Heart right ventricle (tissue), 16 donors: ENCODE measurements at regions of chr1 and their contacts with region 1.

Region 1: DNA sequence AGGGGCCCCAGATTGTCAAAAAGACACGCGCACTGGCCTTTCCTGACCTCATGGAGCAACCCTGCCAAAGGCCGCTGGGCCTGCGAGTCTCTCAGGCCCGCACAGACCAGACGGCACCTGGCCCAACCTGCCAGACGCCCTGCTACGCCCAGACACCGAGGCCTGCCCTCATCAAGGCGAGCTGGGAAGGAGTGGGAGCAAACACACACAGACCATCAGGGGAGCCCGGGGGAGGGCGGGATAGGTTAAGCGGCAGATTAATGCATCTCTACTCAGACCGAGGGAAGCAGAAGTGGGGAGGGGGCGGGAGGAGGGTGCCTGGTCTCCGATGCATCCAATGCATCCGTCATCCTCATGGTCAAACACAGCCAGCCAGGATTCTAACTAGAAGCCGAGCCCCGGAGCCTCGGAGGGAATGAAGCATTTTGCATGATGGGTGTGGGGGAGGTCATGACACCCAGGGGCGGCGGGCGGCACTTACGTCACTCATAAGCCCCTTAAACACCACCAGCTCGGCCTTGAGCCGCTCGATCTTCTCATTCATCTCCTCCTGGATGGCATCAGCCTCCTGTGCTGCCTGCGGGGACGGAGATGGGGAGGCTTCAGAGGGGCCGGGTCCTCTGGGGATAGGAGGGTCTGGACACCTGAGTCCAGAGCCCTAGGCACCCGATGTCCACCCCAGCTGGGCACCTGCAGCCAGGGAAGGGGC is 17.0 kb upstream of the ALDH4A1 start:
- DNase-seq: no peak
- ATAC-seq: no peak
- H3K4me3 ChIP-seq: no peak overlapping the region
- H3K27ac ChIP-seq: no peak overlapping the region
- H3K4me1 ChIP-seq: peaks cover 22 to 49% (median 43%) of the 10 kb centered on the region in 9 donors
- H3K27me3 ChIP-seq: no peaks in the 10 kb centered on the region
- CTCF ChIP-seq: no peak

Region 2: GRCh38 chr1:18820791-18821641 is 98.3 kb before region 1 on chr1:
- intact Hi-C with region 1: no loop called
- DNase-seq: peak; percentile 48 to 75
- ATAC-seq: peak; percentile 73 to 85 (median 81)
- H3K4me3 ChIP-seq: peak overlapping the region in 1 of 10 donors; percentile 3
- H3K27ac ChIP-seq: no peak overlapping the region
- H3K4me1 ChIP-seq: no peaks in the 10 kb centered on the region
- H3K27me3 ChIP-seq: peaks cover 0 to 61% (median 49%) of the 10 kb centered on the region in 7 donors
- CTCF ChIP-seq: peak; percentile 63 to 94 (median 86)

Region 3: DNA sequence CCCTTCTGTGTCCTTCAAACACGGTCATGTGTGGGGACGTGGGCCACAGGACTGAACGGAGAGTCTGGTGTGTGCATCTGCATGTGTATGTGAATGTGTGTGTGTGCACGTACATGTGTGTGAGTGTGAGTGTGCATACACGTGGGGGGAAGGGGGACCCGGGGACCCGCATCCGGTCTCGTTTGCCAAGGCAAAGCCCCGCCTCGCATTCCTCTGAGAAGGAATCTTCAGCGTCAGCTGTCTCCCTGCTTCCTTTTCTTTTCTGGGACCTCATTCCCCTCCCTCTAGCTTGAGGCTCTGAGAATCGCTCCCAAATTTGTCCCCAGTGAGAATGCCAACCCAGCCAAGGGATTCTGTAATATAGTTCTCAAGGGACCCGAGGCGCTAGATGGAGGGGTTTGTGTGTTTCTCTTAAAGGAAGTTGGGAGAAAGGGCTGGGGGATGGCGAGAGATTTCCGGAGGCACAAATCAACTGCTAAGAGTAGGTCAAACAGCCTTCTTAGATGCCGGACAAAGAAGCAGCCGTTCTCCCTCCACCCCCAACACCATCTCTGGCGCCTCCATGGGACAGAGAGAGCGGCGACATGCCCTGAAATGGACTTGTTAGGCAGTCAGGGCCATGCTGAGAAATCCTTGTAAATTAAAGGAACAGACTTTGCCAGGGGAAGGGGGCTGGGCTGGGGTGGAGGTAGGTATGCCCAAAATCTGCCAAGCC is 30.5 kb after region 1 on chr1:
- intact Hi-C with region 1: loop called in 8 of 10 experiments (anchors 2 to 5 kb)
- DNase-seq: peak in 1 of 2 donors; percentile 64
- ATAC-seq: peak; percentile 25 to 67 (median 48)
- H3K4me3 ChIP-seq: peak overlapping the region; percentile 7 to 53 (median 40)
- H3K27ac ChIP-seq: peak overlapping the region; percentile 66 to 94 (median 90)
- H3K4me1 ChIP-seq: peaks cover 27 to 100% (median 70%) of the 10 kb centered on the region in 9 donors
- H3K27me3 ChIP-seq: peaks cover 0 to 5% (median 0%) of the 10 kb centered on the region in 7 donors
- CTCF ChIP-seq: peak in 3 of 9 donors; percentile 18 to 40 (median 27)